CD8-positive, alpha-beta T cell (primary cell): ENCODE measurements at regions of chr19 and their contacts with region 1.

Region 1: GRCh38 chr19:6862673-6863078 is 24.7 kb upstream of the ADGRE1 start:
- DNase-seq: peak; percentile 84 to 96 (median 91)
- ATAC-seq: peak; percentile 90
- H3K4me3 ChIP-seq: peak overlapping the region in 1 of 2 experiments; percentile 33
- H3K4me3 Mint-ChIP-seq: peak overlapping the region; percentile 80
- H3K27ac ChIP-seq: peak overlapping the region in 1 of 2 experiments; percentile 68
- H3K27ac Mint-ChIP-seq: peak overlapping the region; percentile 74
- H3K4me1 ChIP-seq: peaks cover 4% of the 10 kb centered on the region
- H3K4me1 Mint-ChIP-seq: peaks cover 17% of the 10 kb centered on the region
- H3K27me3 ChIP-seq: no peaks in the 10 kb centered on the region
- H3K27me3 Mint-ChIP-seq: no peaks in the 10 kb centered on the region
- CTCF ChIP-seq: peak; percentile 61

Region 2: GRCh38 chr19:6218491-6219162 is 644.0 kb before region 1 on chr19:
- CTCF ChIA-PET with region 1: no interaction called
- POLR2A ChIA-PET with region 1: no interaction called
- intact Hi-C with region 1: loop called (anchors 1 kb)
- DNase-seq: peak; percentile 65 to 91 (median 80)
- ATAC-seq: peak; percentile 95
- H3K4me3 ChIP-seq: no peak overlapping the region
- H3K4me3 Mint-ChIP-seq: no peak overlapping the region
- H3K27ac ChIP-seq: no peak overlapping the region
- H3K27ac Mint-ChIP-seq: peak overlapping the region; percentile 67
- H3K4me1 ChIP-seq: no peaks in the 10 kb centered on the region
- H3K4me1 Mint-ChIP-seq: peaks cover 3% of the 10 kb centered on the region
- H3K27me3 ChIP-seq: no peaks in the 10 kb centered on the region
- H3K27me3 Mint-ChIP-seq: no peaks in the 10 kb centered on the region
- CTCF ChIP-seq: peak; percentile 93

Region 3: DNA sequence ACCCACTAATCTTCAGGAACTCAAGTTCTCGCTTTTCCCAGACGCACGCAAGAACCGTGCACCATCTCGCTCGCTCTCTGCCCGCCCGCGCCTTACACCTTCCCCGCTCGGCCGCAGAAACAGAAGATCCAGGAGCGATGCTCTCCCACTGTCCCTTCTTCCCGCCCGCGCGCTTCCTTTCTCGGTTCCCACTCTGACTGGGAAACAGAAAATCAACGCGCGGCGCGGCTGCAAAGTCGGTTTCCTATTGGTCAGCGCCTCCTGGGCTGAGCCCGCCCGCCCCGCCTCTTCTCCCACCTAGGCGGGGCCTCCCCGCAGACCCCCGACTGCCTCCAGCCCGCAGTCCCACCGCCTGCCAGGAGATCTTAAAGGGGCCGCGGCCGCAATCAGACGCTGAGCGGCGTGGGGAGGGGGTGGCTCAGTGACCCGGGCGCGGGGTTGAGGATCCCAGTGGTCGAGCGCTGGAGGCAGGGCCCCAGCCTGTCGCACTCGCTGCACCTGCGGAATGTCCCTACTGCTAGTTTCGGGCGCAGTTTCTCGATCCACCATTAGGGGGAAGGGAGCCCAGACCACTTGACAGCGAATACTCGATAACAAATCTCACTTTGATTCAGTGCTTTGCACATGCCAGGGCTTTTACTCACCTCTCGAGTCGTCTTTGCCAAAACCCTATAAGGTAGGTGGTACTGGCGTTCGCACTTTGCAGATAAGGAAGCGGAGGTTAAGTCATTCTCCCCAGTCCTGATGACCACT is 402.4 kb before region 1 on chr19:
- CTCF ChIA-PET with region 1: no interaction called
- POLR2A ChIA-PET with region 1: no interaction called
- intact Hi-C with region 1: loop called (anchors 1 kb)
- DNase-seq: peak; percentile 93 to 98 (median 96)
- ATAC-seq: peak; percentile 85
- H3K4me3 ChIP-seq: peak overlapping the region; percentile 73 to 87
- H3K4me3 Mint-ChIP-seq: peak overlapping the region; percentile 94
- H3K27ac ChIP-seq: peak overlapping the region; percentile 62 to 69
- H3K27ac Mint-ChIP-seq: peak overlapping the region; percentile 81
- H3K4me1 ChIP-seq: peaks cover 20% of the 10 kb centered on the region
- H3K4me1 Mint-ChIP-seq: peaks cover 32% of the 10 kb centered on the region
- H3K27me3 ChIP-seq: peaks cover 0 to 3% of the 10 kb centered on the region in 2 experiments
- H3K27me3 Mint-ChIP-seq: no peaks in the 10 kb centered on the region
- CTCF ChIP-seq: peak; percentile 54

Region 4: DNA sequence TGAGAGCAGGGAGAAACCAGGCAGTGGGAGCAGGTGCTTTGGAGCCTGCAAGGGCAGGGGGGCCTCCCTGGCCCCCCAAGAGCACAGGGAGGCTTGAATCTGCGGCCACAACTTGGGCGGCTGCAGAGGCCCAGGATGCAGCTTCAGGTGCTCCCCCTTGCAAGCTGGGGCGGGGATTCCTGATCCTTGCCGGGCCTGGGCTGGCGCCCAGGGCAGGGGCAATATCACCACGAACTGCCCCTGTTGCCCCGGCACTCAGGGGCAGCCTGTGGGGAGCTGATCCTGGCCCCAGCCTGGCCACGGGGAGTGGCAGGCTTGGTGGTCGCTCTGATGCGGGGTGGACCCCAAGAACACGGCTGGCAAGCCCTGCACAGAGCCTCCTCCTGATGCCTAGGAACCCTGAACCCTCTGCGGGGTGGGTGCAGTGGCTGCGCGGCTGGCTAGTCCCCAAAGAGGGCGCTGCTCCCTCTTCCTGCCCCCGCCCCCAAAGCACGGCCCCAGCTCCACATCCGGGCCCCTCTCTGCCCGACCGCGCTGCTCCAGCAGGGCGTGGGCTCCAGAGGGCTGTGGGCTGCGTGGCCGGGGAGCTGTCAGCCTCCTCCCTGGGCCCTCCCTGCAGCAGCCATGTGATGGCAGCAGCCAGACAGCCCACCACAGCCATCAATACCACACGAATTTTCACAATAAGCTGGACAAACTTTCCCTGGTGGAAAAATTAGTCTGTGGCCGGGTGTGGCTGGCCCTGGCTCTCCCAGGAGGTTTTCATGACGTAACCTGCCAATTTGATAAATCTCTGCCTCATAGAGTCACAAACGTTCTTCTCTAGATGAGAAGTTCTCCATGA is 310.8 kb before region 1 on chr19:
- CTCF ChIA-PET with region 1: interaction called, 10 read pairs
- POLR2A ChIA-PET with region 1: no interaction called
- intact Hi-C with region 1: loop called in 1 of 2 experiments (anchors 1 kb)
- DNase-seq: peak; percentile 33 to 89 (median 71)
- ATAC-seq: peak; percentile 99
- H3K4me3 ChIP-seq: peak overlapping the region; percentile 31 to 35
- H3K4me3 Mint-ChIP-seq: peak overlapping the region; percentile 11
- H3K27ac ChIP-seq: peak overlapping the region in 1 of 2 experiments; percentile 28
- H3K27ac Mint-ChIP-seq: peak overlapping the region; percentile 41
- H3K4me1 ChIP-seq: peaks cover 17% of the 10 kb centered on the region
- H3K4me1 Mint-ChIP-seq: peaks cover 10% of the 10 kb centered on the region
- H3K27me3 ChIP-seq: no peaks in the 10 kb centered on the region
- H3K27me3 Mint-ChIP-seq: no peaks in the 10 kb centered on the region
- CTCF ChIP-seq: peak; percentile 48

Region 5: DNA sequence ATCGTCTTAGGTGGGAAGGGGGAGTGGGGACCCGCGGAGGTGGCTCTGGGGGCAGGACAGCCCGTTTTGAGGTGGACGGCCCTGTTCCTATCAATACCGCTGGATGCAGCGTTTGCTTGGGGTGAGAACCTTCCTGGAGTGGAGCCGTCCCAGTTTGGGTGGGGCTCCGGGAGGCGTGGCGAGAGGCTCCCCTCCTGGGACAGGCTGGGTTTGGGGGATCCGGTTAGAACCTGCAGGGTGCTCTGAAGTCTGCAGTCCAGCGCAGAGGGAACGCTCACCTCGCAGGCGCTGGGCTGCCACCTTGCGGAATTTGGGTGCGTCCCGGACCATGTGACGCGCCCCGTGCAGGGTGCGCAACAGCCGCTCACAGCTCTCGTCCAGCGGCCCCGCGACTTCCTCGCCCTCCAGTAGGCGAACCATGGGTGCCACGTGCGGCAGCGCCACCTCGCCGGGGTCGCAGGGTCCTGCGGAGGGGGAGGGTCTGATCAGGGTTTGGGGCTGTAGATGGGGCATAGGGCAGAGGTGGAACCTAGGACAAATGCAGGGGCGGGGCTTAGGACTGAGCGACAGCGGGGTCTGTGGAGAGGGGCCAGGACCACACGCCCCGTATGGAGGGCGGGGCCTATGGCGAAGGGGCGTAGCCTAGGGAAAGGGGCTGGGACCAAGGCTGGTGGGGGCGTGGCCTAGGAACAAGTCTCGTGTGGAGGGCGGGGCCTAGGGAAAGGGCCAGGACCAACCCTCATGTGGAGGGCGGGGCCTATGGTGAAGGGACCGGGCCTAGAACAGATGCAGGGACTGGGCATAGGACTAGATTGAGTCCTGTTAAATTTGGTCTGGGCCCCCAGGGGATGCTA is 109.3 kb before region 1 on chr19:
- CTCF ChIA-PET with region 1: interaction called, 5 read pairs
- POLR2A ChIA-PET with region 1: no interaction called
- intact Hi-C with region 1: loop called in 1 of 2 experiments (anchors 1 kb)
- DNase-seq: peak; percentile 51 to 89 (median 73)
- ATAC-seq: peak; percentile 90
- H3K4me3 ChIP-seq: peak overlapping the region; percentile 42 to 59
- H3K4me3 Mint-ChIP-seq: peak overlapping the region; percentile 76
- H3K27ac ChIP-seq: peak overlapping the region; percentile 35 to 40
- H3K27ac Mint-ChIP-seq: peak overlapping the region; percentile 81
- H3K4me1 ChIP-seq: peaks cover 4% of the 10 kb centered on the region
- H3K4me1 Mint-ChIP-seq: peaks cover 12% of the 10 kb centered on the region
- H3K27me3 ChIP-seq: no peaks in the 10 kb centered on the region
- H3K27me3 Mint-ChIP-seq: no peaks in the 10 kb centered on the region
- CTCF ChIP-seq: peak; percentile 47

Region 6: GRCh38 chr19:6801485-6802086 is 61.1 kb before region 1 on chr19:
- CTCF ChIA-PET with region 1: interaction called, 21 read pairs
- POLR2A ChIA-PET with region 1: interaction called, 3 read pairs
- intact Hi-C with region 1: loop called (anchors 2 kb)
- DNase-seq: peak; percentile 54 to 96 (median 87)
- ATAC-seq: peak; percentile 78
- H3K4me3 ChIP-seq: peak overlapping the region; percentile 71 to 79
- H3K4me3 Mint-ChIP-seq: peak overlapping the region; percentile 87
- H3K27ac ChIP-seq: peak overlapping the region; percentile 74 to 91
- H3K27ac Mint-ChIP-seq: peak overlapping the region; percentile 95
- H3K4me1 ChIP-seq: peaks cover 48% of the 10 kb centered on the region
- H3K4me1 Mint-ChIP-seq: peaks cover 68% of the 10 kb centered on the region
- H3K27me3 ChIP-seq: no peaks in the 10 kb centered on the region
- H3K27me3 Mint-ChIP-seq: no peaks in the 10 kb centered on the region
- CTCF ChIP-seq: no peak